Head of caudate nucleus (tissue), 42 donors: ENCODE measurements at regions of chr20 and their contacts with region 1.

Region 1: DNA sequence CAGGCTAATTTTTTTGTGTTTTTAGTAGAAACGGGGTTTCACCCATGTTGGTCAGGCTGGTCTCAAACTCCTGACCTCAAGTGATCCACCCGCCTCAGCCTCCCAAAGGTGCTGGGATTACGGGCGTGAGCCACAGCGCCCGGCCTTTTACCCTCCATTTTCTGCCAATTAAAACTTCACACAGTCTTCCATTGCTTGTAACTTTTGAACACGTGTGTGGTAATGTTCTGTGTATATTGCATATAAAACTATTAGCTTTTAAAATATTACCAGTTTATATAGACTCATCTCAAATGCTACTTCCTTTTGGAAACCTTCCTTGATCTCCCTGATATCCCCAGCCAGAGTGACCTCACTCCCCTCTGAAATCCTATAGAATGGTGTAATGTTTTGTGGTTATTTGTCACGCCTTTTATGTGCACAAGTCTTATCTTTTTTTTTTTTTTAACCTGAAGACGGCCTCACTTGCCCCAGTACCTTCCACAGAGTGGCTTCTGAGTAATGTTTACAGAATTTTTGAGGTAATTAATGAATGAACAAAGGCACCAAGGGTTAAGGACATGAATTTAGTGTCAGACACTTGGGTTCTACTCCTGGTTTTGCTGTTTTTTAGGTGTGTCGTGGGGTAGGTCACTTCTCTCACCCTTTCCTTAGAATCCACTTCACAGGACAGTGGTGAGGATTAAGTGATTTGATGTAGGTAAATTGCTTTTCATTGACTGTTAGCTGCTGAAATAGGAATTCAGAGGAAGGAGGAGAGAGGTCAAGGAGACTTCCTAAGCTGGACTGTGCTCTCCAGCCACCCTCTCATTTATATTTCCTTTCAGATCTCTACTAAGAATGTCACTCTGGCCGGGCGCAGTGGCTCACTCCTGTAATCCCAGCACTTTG is 11.2 kb upstream of the MMP24 start:
- DNase-seq: no peak

Region 2: GRCh38 chr20:34861386-34862084 is 353.8 kb before region 1 on chr20:
- intact Hi-C with region 1: loop called (anchors 10 kb)
- DNase-seq: peak in 1 of 42 donors; percentile 35